Left cardiac atrium (tissue), 4 donors: ENCODE measurements at regions of chr2 and their contacts with region 1.

Region 1: DNA sequence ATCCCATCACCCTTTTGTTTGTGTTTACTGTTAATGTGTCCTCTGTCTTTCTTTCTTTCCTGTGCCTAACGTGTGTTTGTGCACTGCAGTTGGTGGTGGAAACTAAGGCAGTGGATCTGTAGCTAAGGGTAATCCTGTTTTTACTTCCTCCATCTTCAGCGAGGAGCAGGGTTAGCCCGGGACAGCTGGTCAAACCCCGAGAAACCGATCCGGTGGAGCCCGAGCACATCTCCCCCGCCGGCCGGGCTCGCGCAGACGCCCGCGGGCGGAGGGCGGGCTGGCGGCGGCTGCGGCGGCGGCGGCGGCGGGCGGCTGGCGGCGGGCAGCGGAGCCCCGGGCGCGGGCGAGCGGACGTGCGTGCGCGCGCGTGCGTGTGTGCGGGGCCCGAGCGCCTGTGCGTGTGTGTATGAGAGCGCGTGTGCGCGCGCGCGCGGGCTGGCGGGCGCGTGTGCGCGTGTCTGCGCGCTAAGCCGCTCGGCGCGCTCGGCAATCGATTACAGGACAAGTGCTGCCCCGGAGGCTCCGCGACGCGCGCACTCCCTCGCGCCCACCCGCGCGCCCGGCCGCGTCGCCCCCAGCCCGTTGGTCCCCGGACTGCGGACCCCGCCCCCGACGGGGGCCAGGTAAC is at the start of gene IKZF2:
- DNase-seq: peak; percentile 90
- ATAC-seq: peak; percentile 96
- total RNA-seq, gene IKZF2: 3.8 to 6.3 TPM

Region 2: GRCh38 chr2:212686285-212686895 is 465.2 kb before region 1 on chr2:
- intact Hi-C with region 1: loop called in 1 of 2 experiments (anchors 2 kb)
- DNase-seq: peak; percentile 37
- ATAC-seq: peak in 1 of 2 donors; percentile 33